ENCODE measurements at regions of chr4 and their contacts with region 1.

Region 1: GRCh38 chr4:173529477-173530325 is at the start of gene HAND2:
- DNase-seq: peak in 1 of 2 donors; percentile 90
- H3K4me3 ChIP-seq: peak within 1 kb of the TSS; percentile 61 to 93
- H3K27ac ChIP-seq: peak within 1 kb of the TSS; percentile 96 to 97
- H3K4me1 ChIP-seq: peaks cover 0 to 4% of the 10 kb centered on the region in 2 donors
- H3K27me3 ChIP-seq: no peaks in the 10 kb centered on the region
- CTCF ChIP-seq: no peak
- total RNA-seq, gene HAND2: 6.0 TPM

Region 2: DNA sequence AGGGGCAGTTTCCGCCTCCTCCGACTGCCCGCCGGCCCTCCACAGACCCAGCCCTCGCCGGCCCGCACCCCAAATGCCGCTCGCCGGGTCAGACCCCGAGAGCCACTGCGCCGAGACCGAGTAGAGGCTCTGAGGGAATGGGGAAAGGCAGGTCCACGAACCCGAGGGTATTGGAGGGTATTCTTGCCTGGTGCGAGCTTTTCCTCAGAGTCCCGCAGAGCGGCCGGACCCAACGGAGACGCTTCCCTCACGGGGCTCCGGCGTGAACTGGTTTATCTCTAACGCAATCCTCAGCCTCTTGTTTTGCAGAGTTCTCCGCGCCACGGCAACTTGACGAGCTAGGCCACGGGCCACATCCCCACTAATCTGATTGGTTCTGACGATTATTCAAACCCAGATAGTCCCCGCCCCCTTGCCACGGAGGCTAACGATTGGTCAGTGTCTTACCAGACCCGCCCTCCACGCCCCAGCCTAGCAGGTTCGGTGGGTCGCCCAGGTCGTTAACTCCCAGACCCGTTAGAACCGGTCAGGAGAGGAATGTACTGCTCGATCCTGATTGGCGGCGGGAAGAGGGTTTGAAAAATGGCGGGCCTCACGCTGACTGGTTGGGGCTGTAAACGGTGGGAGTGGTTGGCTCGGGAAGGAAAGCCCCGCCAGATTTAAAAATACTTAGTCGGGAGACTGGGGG is 195.5 kb before region 1 on chr4 and contains the start of gene HMGB2:
- intact Hi-C with region 1: loop called (anchors 5 kb)
- DNase-seq: peak; percentile 100
- H3K4me3 ChIP-seq: peak within 1 kb of the TSS; percentile 97 to 99
- H3K27ac ChIP-seq: peak within 1 kb of the TSS; percentile 93 to 98
- H3K4me1 ChIP-seq: peaks cover 0 to 17% of the 10 kb centered on the region in 2 donors
- H3K27me3 ChIP-seq: no peaks in the 10 kb centered on the region
- CTCF ChIP-seq: no peak
- total RNA-seq, gene HMGB2: 36.1 TPM

Region 3: GRCh38 chr4:173585876-173586572 is 56.3 kb after region 1 on chr4:
- intact Hi-C with region 1: loop called (anchors 2 kb)
- DNase-seq: no peak
- H3K4me3 ChIP-seq: no peak overlapping the region
- H3K27ac ChIP-seq: peak overlapping the region; percentile 18 to 25
- H3K4me1 ChIP-seq: peaks cover 0 to 2% of the 10 kb centered on the region in 2 donors
- H3K27me3 ChIP-seq: no peaks in the 10 kb centered on the region
- CTCF ChIP-seq: no peak

Region 4: DNA sequence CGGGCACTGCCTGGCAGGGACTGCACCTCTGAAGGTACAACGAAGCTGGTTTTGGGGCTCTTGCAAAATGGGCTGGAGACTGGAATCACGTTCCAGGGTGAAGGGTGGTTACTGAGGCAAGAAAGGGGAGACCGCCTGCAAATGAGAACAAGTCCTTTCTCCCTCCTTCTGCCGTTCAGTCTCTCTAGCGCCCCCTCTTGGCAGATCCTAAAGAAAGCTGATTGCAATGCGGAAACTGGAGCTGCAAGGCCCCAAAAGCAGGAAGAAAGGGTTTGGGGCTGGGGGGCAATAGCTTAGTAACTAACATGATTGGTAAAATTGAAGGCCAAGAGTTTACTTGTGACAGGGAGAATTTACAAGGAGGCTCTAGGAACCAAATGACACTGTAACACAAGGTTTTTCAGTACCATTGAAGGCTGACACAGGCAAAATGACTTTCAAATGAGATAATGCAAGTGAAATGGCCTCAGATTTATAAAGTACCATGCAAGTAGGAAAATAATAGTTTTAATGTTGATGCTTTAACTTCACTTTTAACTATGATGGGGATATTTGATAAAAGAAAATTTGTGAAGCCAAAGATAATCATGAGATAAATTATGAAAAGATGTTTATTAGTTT is 223.0 kb after region 1 on chr4:
- intact Hi-C with region 1: loop called (anchors 5 kb)
- DNase-seq: no peak
- H3K4me3 ChIP-seq: no peak overlapping the region
- H3K27ac ChIP-seq: no peak overlapping the region
- H3K4me1 ChIP-seq: no peaks in the 10 kb centered on the region
- H3K27me3 ChIP-seq: no peaks in the 10 kb centered on the region
- CTCF ChIP-seq: peak in 1 of 3 experiments; percentile 29